ENCODE measurements at regions of chr3 and their contacts with region 1.

Region 1: GRCh38 chr3:45760878-45761711 is 35.2 kb downstream of the SLC6A20 start:
- DNase-seq: peak in 1 of 2 donors; percentile 34
- ATAC-seq: peak; percentile 60 to 89 (median 80)
- H3K4me3 ChIP-seq: no peak overlapping the region
- H3K27ac ChIP-seq: no peak overlapping the region
- H3K4me1 ChIP-seq: peaks cover 0 to 3% (median 0%) of the 10 kb centered on the region in 9 donors
- H3K27me3 ChIP-seq: peaks cover 0 to 26% (median 13%) of the 10 kb centered on the region in 7 donors
- CTCF ChIP-seq: peak; percentile 27 to 73 (median 67)

Region 2: DNA sequence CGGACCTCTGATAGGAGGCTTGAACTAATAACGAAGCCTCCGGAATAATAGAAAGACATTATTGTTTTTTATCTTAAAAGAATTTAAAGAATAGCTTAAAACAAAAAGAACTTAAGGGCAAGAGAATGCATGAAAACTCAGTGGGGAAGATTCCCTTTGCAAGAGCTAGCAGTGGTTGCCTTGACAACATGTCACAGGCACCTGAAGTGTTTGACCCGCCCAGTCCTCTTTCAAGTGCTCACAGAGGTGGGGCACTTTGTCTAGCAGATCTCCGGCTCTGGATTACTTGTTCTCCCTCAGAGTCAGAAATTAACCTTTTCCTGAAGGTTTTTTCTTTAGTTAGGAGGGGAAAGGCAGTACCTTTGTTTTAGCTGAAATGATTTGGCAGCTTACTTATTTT is 334.9 kb before region 1 on chr3:
- intact Hi-C with region 1: no loop called
- DNase-seq: no peak
- ATAC-seq: no peak
- H3K4me3 ChIP-seq: no peak overlapping the region
- H3K27ac ChIP-seq: no peak overlapping the region
- H3K4me1 ChIP-seq: no peaks in the 10 kb centered on the region
- H3K27me3 ChIP-seq: no peaks in the 10 kb centered on the region
- CTCF ChIP-seq: no peak

Region 3: DNA sequence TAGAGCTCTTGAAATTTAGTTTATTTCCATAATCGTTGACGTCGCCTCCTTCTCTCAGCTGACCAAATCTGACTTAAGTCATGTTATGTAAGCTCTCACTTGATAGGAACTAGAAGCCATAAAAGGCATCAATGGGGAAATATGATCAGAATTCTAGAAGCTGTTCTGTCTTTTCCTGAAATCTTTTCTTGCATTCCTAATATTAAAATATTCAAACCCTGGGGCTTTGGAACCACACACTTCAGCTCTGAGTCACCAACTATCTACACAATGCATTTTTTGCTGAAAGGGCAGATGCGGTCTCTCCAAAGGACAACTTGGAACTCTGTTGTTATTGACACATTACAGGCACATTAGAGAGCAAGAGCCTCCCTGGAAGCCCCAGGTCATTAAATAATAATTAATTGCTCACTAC is 281.5 kb before region 1 on chr3:
- intact Hi-C with region 1: no loop called
- DNase-seq: no peak
- ATAC-seq: no peak
- H3K4me3 ChIP-seq: no peak overlapping the region
- H3K27ac ChIP-seq: no peak overlapping the region
- H3K4me1 ChIP-seq: peaks cover 0 to 6% (median 0%) of the 10 kb centered on the region in 9 donors
- H3K27me3 ChIP-seq: no peaks in the 10 kb centered on the region
- CTCF ChIP-seq: no peak

Region 4: DNA sequence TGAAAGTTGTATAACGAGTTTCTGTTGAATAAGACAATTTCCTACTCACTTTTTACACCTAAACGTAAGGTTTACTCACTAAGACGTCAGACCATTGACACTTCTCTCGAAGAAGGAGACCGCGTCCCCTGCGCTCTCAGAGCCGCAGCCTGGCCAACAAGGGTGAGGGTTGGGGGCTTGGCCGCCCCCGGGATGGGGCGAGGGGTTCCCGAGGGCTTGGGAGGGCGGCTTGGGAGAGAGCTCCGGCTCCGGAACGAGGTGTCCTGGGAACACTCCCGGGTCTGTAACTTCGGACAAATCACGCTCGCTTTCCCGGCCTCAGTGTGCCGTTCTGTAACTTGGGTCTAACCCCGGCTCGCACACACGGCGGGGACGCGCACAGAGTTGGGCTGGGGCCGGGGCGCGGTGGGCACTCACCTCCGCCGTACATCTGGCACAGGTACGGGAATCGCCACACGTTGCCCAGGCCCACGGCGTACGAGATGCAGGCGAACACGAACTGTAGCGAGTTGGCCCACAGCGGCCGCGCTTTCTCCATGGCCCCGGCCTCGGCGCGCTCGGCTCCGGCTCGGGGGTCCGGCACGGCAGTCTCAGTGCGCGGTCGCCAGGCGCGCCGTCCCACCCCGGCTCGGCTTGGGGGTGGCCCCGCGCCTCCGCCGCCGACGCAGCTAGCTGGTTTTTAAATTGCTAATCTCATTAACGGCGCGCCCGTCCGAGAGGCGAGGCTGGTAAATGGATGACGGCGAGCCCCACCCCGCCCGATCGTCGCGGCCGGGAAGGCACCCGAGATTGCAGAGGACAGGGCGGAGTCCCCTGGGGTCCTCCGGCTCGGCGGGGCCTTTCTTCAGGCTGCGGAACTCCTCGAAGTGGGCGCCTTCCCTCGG is 35.0 kb after region 1 on chr3 and contains the start of gene SLC6A20:
- intact Hi-C with region 1: no loop called
- DNase-seq: no peak
- ATAC-seq: peak in 2 of 8 donors; percentile 25 to 38
- H3K4me3 ChIP-seq: peak within 1 kb of the TSS in 9 of 10 donors; percentile 25 to 56 (median 47)
- H3K27ac ChIP-seq: no peak within 1 kb of the TSS
- H3K4me1 ChIP-seq: peaks cover 0 to 16% (median 9%) of the 10 kb centered on the region in 9 donors
- H3K27me3 ChIP-seq: peaks cover 3 to 68% (median 48%) of the 10 kb centered on the region in 7 donors
- CTCF ChIP-seq: no peak
- total RNA-seq, gene SLC6A20: 0.09 TPM in 1 of 10 donors, not detected in the others

Region 5: DNA sequence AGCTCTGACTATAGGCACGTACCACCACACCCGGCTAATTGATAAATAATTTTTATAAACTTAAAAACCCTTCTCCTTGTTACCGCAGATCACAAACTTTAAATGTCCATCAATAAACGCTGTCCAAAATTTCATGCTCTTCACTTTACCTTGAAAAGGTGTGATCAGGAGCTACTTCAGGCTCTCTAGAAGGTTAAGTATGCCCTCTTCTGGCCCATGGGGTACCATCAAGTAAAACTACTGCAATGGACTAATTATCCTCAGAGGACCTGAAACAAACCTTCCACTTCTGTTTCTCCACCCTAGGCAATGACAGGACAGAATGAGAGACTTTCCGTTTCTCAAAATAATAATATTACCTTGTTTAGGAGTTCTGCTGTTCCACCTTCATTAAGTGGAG is 71.6 kb after region 1 on chr3:
- intact Hi-C with region 1: loop called in 9 of 10 experiments (anchors 1 to 10 kb)
- DNase-seq: no peak
- ATAC-seq: no peak
- H3K4me3 ChIP-seq: no peak overlapping the region
- H3K27ac ChIP-seq: no peak overlapping the region
- H3K4me1 ChIP-seq: no peaks in the 10 kb centered on the region
- H3K27me3 ChIP-seq: no peaks in the 10 kb centered on the region
- CTCF ChIP-seq: peak in 7 of 9 donors; percentile 19 to 54 (median 47)

Region 6: GRCh38 chr3:45929042-45929679 is 168.1 kb after region 1 on chr3:
- intact Hi-C with region 1: loop called in 7 of 10 experiments (anchors 5 to 10 kb)
- DNase-seq: no peak
- ATAC-seq: peak in 7 of 8 donors; percentile 20 to 73 (median 61)
- H3K4me3 ChIP-seq: no peak overlapping the region
- H3K27ac ChIP-seq: no peak overlapping the region
- H3K4me1 ChIP-seq: peaks cover 0 to 21% (median 13%) of the 10 kb centered on the region in 9 donors
- H3K27me3 ChIP-seq: no peaks in the 10 kb centered on the region
- CTCF ChIP-seq: peak; percentile 20 to 82 (median 53)

Region 7: DNA sequence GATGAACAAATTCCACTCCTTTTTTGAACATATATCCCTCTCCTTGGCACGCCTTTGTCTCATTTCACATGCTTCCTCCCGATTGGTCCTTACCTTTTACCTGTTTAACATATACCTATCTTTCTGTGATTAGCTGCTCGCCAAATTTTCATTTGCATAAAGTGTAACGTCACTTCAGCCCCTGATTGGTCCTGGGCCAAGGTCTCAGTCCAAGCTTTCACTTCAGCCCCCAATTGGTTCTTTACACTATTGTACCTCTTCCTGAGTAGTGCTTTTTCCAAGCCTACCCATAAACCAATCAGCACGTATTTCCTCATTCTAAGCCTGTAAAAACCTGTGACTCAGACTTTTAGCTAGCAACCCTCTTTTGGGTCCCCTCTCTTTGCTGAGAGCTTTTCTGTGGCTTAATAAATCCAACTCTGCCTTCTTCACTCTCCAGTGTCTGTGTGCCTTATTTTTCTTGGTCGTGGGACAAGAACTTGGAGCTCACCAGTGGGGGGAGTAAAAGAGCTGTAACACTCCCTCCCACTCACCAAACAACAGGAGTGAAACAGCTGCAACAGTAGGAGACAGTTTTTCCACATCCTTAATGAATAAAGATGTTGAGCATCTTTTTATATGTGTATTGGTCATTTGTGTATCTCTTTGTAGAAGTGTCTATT is 266.8 kb after region 1 on chr3:
- intact Hi-C with region 1: no loop called
- DNase-seq: no peak
- ATAC-seq: no peak
- H3K4me3 ChIP-seq: no peak overlapping the region
- H3K27ac ChIP-seq: no peak overlapping the region
- H3K4me1 ChIP-seq: peaks cover 0 to 3% (median 0%) of the 10 kb centered on the region in 9 donors
- H3K27me3 ChIP-seq: no peaks in the 10 kb centered on the region
- CTCF ChIP-seq: no peak

Region 8: GRCh38 chr3:46078712-46079400 is 317.8 kb after region 1 on chr3:
- intact Hi-C with region 1: loop called (anchors 1 to 10 kb)
- DNase-seq: peak; percentile 42 to 90
- ATAC-seq: peak; percentile 93 to 97 (median 95)
- H3K4me3 ChIP-seq: peak overlapping the region in 3 of 10 donors; percentile 23 to 28 (median 27)
- H3K27ac ChIP-seq: no peak overlapping the region
- H3K4me1 ChIP-seq: peaks cover 0 to 12% (median 0%) of the 10 kb centered on the region in 9 donors
- H3K27me3 ChIP-seq: no peaks in the 10 kb centered on the region
- CTCF ChIP-seq: peak; percentile 82 to 100 (median 98)

Measured in heart right ventricle (tissue), 16 donors.